ENCODE measurements at regions of chr1 and their contacts with region 1.

Region 1: GRCh38 chr1:92960395-92961130 is 699 bp downstream of the DIPK1A start:
- DNase-seq: peak; percentile 53
- H3K4me3 Mint-ChIP-seq: peak overlapping the region; percentile 90
- H3K27ac Mint-ChIP-seq: peak overlapping the region; percentile 97
- H3K4me1 Mint-ChIP-seq: peaks cover 41% of the 10 kb centered on the region
- H3K27me3 Mint-ChIP-seq: no peaks in the 10 kb centered on the region

Region 2: GRCh38 chr1:92310185-92310597 is 650.4 kb before region 1 on chr1:
- intact Hi-C with region 1: loop called (anchors 10 kb)
- DNase-seq: no peak
- H3K4me3 Mint-ChIP-seq: no peak overlapping the region
- H3K27ac Mint-ChIP-seq: no peak overlapping the region
- H3K4me1 Mint-ChIP-seq: peaks cover 42% of the 10 kb centered on the region
- H3K27me3 Mint-ChIP-seq: no peaks in the 10 kb centered on the region

Region 3: DNA sequence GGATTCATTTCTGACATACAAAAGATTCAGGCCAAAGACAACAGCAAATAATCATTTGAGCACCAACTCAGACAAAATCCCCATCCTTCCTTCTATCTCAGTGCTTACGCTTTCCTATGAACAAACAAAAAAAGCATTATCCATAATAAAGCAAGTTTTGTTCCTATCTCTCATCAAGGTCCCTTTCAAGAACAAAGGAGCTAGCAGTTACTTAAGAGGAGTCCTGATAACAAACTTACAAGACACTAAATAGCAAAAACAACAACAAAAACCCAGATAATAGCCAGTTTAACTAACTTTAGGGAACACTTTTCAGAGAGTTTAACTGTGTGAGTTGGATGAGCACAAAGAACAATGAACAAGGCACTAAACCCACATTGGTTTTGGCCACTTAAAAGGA is 186.2 kb before region 1 on chr1:
- intact Hi-C with region 1: no loop called
- DNase-seq: no peak
- H3K4me3 Mint-ChIP-seq: no peak overlapping the region
- H3K27ac Mint-ChIP-seq: no peak overlapping the region
- H3K4me1 Mint-ChIP-seq: no peaks in the 10 kb centered on the region
- H3K27me3 Mint-ChIP-seq: peaks cover 42% of the 10 kb centered on the region

Region 4: DNA sequence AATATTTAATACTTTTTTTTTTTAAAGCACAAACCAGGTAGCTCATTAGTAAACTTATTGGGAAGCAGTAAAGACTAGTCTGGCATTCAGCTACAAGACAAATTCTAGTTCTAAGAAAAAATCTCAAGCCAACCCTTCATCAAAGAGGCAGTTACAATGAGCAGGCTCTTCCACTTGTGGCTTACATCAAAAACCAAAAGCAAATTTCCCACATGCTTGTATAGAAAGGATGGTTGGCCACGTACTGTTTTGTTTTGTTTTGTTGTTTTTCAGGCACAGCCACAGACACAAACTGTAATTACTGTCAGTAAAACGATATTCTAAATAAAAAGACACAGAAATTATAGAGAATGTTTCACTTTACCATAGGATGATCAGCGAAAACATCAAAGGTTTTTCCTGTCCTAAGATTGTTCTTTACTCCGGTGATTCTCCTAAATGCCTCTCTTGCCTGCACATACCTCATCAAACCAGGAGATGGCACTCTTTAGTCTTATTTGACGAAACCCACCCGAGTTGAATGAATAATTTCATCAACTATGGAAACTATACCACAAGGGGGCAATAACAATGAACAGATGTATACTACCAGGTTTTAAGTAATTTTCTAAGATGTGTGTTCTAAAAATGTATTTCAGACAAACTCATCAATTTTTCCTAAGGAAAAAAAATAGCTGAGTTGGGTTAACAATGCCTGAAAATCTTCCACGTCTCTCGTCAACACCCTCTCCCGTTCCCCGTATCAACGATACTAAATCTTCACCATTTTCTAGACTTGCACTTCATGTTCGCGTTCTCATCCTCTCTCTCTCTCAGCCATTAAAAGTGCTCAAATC is 101.8 kb before region 1 on chr1:
- intact Hi-C with region 1: loop called (anchors 1 kb)
- DNase-seq: peak; percentile 57
- H3K4me3 Mint-ChIP-seq: peak overlapping the region; percentile 46
- H3K27ac Mint-ChIP-seq: peak overlapping the region; percentile 64
- H3K4me1 Mint-ChIP-seq: peaks cover 24% of the 10 kb centered on the region
- H3K27me3 Mint-ChIP-seq: no peaks in the 10 kb centered on the region

Region 5: DNA sequence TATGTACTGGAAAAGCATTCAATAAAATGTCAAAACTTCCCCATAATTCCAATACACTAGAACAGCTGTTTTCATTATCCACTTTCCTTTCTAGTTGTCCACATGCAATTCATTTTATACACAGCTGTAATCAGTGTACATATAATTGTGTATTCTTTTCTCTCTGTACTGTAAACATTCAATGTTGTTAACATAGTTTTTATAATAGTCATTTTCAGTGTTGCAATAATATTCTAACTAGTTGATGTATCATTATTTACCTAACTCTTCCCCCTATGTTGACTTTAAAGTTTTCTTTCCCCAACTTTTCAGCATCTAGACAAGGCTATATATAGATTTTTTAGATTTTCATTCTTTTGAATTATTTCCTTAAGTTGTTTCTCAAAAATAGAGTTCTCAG is 43.7 kb before region 1 on chr1:
- intact Hi-C with region 1: no loop called
- DNase-seq: no peak
- H3K4me3 Mint-ChIP-seq: no peak overlapping the region
- H3K27ac Mint-ChIP-seq: no peak overlapping the region
- H3K4me1 Mint-ChIP-seq: peaks cover 5% of the 10 kb centered on the region
- H3K27me3 Mint-ChIP-seq: no peaks in the 10 kb centered on the region

Region 6: DNA sequence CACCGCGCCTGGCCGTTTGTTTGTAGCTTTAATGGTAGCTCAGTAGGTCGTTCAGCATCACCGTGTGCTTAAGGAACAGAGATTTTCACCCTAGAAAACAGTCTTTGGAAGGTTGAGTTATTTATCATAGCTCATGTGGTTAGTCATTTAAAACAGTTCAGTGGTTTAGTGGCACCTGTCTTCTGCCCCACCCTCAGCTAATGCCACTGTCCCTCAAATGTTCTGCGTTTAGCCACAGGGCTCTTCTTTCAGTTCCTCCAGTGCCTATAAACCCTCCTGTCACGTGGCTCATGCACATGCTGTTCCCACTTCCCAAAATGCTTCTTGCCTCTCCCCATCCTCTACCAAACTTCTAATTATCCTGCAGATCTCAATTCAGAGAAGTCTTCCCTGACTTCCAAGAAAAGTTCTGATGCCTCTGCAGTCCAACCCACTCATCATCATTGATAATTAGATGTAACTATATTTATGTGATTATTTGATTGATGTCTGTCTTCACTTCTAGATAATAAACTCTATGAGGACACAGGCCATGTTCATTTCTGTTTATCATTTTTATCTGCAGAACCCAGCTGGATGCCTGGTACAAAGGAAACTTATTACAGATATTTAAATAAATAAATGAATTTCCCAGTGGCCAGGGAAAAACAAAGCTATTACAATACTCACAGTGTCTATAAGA is 15.1 kb after region 1 on chr1:
- intact Hi-C with region 1: loop called (anchors 1 kb)
- DNase-seq: no peak
- H3K4me3 Mint-ChIP-seq: peak overlapping the region; percentile 3
- H3K27ac Mint-ChIP-seq: peak overlapping the region; percentile 70
- H3K4me1 Mint-ChIP-seq: peaks cover 80% of the 10 kb centered on the region
- H3K27me3 Mint-ChIP-seq: no peaks in the 10 kb centered on the region

Region 7: DNA sequence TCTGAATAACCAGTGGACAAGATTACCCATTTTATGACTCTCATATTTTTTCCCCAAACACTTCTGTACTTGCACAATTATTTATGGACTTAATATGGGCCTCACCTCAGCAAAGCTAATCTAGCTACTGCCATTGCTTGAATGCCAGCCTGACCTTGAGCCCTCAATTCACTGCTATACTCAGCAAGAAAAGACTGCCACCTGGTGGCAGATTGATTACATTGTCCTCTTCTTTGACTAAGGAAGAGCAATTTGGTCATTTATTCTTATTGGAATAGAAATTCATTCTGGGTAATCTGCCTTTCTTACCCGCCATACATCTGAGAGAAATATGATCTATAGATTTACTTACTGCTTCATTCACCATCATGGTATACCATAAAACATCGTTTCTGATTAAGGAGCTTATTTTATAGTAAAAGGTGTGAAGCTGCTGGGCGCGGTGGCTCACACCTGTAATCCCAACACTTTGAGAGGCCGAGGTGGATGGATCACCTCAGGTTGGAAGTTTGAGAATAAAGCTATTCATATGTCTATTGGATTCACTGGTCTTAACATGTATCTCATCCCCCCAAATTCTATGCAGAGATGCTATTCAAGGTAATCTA is 33.6 kb after region 1 on chr1:
- intact Hi-C with region 1: loop called (anchors 1 kb)
- DNase-seq: peak; percentile 66
- H3K4me3 Mint-ChIP-seq: no peak overlapping the region
- H3K27ac Mint-ChIP-seq: peak overlapping the region; percentile 32
- H3K4me1 Mint-ChIP-seq: peaks cover 48% of the 10 kb centered on the region
- H3K27me3 Mint-ChIP-seq: peaks cover 2% of the 10 kb centered on the region

Region 8: GRCh38 chr1:93078986-93079654 is 118.6 kb after region 1 on chr1 and contains the start of gene MTF2:
- intact Hi-C with region 1: loop called (anchors 2 kb)
- DNase-seq: peak; percentile 93
- H3K4me3 Mint-ChIP-seq: peak within 1 kb of the TSS; percentile 98
- H3K27ac Mint-ChIP-seq: peak within 1 kb of the TSS; percentile 95
- H3K4me1 Mint-ChIP-seq: peaks cover 58% of the 10 kb centered on the region
- H3K27me3 Mint-ChIP-seq: no peaks in the 10 kb centered on the region
- total RNA-seq, gene MTF2: 68.4 and 71.0 TPM in 2 replicates

Region 9: GRCh38 chr1:93597709-93598108 is 637.1 kb after region 1 on chr1:
- intact Hi-C with region 1: no loop called
- DNase-seq: no peak
- H3K4me3 Mint-ChIP-seq: no peak overlapping the region
- H3K27ac Mint-ChIP-seq: no peak overlapping the region
- H3K4me1 Mint-ChIP-seq: no peaks in the 10 kb centered on the region
- H3K27me3 Mint-ChIP-seq: peaks cover 15% of the 10 kb centered on the region